ENCODE measurements at regions of chr3 and their contacts with region 1.

Region 1: GRCh38 chr3:13343601-13344000 is 76.5 kb downstream of the NUP210 start:
- H3K4me3 ChIP-seq: no peak overlapping the region
- H3K27ac ChIP-seq: no peak overlapping the region
- H3K4me1 ChIP-seq: no peaks in the 10 kb centered on the region
- CTCF ChIP-seq: no peak

Region 2: GRCh38 chr3:13332158-13332557 is 11.4 kb before region 1 on chr3:
- CTCF ChIA-PET with region 1: no interaction called
- POLR2A ChIA-PET with region 1: no interaction called
- H3K4me3 ChIP-seq: no peak overlapping the region
- H3K27ac ChIP-seq: no peak overlapping the region
- H3K4me1 ChIP-seq: no peaks in the 10 kb centered on the region
- CTCF ChIP-seq: no peak

Region 3: DNA sequence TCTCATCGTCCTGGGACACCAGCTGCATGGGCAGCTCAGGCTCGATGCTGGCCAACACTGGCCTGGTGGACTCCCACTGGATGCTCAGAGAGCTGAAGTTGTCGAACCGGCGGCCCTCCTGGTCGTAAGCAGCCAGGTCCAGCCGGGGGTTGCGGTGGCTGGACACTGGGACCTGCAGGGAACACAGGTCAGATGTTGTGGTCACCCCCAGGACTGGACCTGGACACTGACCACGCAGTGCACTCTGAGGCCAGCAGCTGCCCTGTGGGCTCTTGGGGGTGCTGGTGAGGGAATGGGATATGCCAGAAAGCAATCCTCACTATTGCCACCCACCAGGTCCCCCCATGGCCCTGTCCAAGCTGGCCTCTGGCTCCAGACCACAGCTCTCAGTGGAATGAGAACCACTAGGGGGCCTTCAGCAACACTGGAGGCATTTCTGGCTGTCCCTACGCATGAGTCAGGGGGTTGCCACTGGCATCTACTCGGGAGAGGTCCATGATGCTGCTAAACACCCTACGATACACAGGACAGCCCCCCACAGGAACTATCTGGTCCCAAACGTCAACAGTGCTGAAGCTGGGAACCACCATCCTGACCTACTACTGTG is 10.4 kb after region 1 on chr3:
- CTCF ChIA-PET with region 1: interaction called, 12 read pairs
- POLR2A ChIA-PET with region 1: no interaction called
- H3K4me3 ChIP-seq: no peak overlapping the region
- H3K27ac ChIP-seq: no peak overlapping the region
- H3K4me1 ChIP-seq: no peaks in the 10 kb centered on the region
- CTCF ChIP-seq: no peak

Region 4: DNA sequence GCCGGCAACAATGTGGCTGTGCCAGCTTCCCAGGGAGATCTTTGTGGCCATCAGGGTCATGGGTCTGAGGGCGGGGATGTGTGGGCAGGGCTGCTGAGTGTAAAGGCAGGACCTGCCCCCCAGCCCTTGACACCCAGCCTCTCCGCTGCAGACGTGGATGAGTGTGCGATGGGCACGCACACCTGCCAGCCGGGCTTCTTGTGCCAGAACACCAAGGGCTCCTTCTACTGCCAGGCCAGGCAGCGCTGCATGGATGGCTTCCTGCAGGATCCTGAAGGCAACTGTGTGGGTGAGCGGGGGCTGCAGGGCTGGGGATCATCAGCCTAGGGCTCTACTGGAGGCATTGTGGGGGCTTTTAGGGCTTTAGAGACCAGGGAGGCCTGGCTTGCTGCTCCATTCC is 284.1 kb after region 1 on chr3:
- CTCF ChIA-PET with region 1: no interaction called
- POLR2A ChIA-PET with region 1: no interaction called
- H3K4me3 ChIP-seq: no peak overlapping the region
- H3K27ac ChIP-seq: no peak overlapping the region
- H3K4me1 ChIP-seq: no peaks in the 10 kb centered on the region
- CTCF ChIP-seq: no peak